ENCODE measurements at regions of chr13 and their contacts with region 1.

Region 1: GRCh38 chr13:106373989-106374572 is 161.4 kb downstream of the EFNB2 start:
- DNase-seq: peak; percentile 48
- H3K4me3 ChIP-seq: no peak overlapping the region
- H3K27ac ChIP-seq: peak overlapping the region; percentile 66
- H3K4me1 ChIP-seq: peaks cover 40% of the 10 kb centered on the region
- H3K27me3 ChIP-seq: no peaks in the 10 kb centered on the region
- CTCF ChIP-seq: no peak
- POLR2A ChIP-seq: no peak

Region 2: DNA sequence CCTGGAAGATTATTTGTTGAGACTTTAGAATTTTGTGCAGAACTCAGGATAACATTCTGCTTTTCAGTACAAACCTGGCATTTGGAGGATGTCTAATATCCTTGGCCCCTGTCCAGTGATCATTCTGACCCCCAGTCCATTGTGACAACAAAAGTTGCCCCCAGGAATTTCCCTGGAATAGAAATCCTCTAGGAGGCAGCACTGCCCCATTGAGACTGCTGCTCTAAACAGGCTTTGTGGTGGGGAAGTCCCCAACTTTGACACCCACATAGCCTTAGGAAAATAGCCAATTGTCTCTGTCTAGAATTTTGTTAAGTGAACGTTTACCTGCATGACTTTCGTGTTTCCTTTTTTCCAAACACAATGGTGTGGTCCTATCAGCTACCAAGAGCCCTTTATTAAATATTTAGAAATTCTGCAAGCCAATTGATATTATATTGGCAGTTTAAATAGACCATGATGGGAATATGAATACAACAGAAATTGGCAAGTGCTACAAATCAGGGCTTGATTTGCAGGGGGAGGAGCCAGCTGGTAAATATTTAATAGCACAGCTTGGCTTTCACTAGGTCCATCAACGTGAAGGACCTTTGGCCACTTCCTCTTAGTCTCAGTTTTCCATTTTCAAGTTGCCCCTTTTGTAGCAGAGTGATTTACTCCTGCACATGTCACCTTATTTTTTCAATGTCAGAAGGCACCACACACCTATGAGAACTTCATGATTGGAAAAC is 290.3 kb before region 1 on chr13:
- CTCF ChIA-PET with region 1: no interaction called
- POLR2A ChIA-PET with region 1: no interaction called
- dilution Hi-C with region 1: no loop called
- intact Hi-C with region 1: loop called (anchors 1 kb)
- DNase-seq: peak; percentile 86
- H3K4me3 ChIP-seq: no peak overlapping the region
- H3K27ac ChIP-seq: no peak overlapping the region
- H3K4me1 ChIP-seq: no peaks in the 10 kb centered on the region
- H3K27me3 ChIP-seq: no peaks in the 10 kb centered on the region
- CTCF ChIP-seq: peak; percentile 71 to 77
- POLR2A ChIP-seq: no peak

Region 3: DNA sequence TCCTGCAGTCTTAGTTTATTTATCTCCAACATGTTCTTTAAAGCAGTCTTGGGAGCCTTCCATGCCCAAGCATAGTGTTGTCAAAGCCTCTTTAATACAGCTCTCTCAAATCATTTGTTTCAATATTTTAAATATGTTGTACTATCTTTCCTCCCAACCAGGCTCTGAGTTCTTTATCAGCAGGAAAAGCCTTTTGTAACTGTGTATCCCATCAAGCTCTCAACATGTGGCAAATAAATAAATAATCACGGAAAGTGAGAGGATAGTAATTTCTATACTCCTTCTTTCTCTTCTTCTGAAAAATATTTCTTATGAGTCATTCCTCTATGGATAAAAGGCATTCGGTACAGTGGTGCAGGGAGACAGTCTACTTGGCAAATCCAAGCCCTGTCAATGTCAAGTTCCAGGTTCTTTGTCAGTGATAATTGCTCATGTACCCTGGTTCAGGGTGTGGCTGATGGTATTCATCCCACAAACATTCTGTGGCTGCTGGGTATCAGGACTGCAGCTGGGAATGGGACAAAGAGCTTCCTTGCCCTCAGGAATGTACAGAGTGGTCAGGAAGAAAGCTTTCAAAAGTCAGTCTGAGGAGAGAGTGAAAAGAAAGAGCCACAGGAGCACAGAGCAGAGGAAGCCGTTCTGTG is 222.9 kb before region 1 on chr13:
- CTCF ChIA-PET with region 1: no interaction called
- POLR2A ChIA-PET with region 1: no interaction called
- dilution Hi-C with region 1: no loop called
- intact Hi-C with region 1: loop called (anchors 10 kb)
- DNase-seq: peak; percentile 73
- H3K4me3 ChIP-seq: no peak overlapping the region
- H3K27ac ChIP-seq: peak overlapping the region; percentile 7
- H3K4me1 ChIP-seq: peaks cover 16% of the 10 kb centered on the region
- H3K27me3 ChIP-seq: no peaks in the 10 kb centered on the region
- CTCF ChIP-seq: no peak
- POLR2A ChIP-seq: no peak

Region 4: DNA sequence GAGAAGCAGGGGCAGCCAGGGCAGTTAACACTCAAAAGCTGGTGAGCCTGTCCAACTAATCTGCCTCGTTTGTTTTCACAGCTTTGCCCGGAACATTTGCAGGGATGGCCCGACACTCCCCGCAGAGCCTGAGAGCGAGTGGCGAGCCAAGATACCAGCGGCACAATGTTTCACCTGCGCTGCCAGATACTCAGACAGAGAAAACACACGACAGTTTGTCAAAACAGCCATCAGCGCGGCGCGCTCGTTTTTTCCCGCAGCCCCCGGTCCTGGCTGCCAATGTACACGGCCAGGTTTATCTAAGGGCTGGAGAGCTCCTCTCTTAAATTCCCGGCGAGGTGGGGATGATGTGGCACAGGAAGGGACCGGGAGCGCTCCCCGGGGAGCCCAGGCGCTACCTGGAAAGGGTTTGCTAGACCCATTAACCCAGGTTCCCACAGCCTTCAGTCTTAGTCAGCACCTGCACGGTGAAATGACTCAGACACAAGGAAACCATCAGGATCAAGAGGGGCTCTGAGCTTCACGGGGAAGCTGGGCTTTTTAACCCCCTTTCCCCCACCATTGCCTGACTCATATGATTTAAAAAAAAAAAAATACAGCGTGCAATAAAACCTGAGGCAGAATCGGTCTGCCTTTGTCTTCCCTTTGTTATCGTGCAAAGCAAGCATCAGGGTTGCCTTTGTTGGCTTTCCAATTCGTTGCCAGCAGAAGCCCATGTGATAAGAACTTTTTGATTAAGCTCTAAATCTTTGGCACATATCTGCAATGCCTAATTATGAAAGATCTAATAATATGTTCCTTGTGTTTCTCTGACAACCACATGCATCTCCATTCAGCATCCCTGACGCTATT is 24.8 kb before region 1 on chr13:
- CTCF ChIA-PET with region 1: no interaction called
- POLR2A ChIA-PET with region 1: interaction called, 3 read pairs
- dilution Hi-C with region 1: no loop called
- intact Hi-C with region 1: loop called (anchors 1 kb)
- DNase-seq: peak; percentile 99
- H3K4me3 ChIP-seq: peak overlapping the region in 2 of 3 experiments; percentile 17 to 52
- H3K27ac ChIP-seq: peak overlapping the region; percentile 98
- H3K4me1 ChIP-seq: peaks cover 30% of the 10 kb centered on the region
- H3K27me3 ChIP-seq: no peaks in the 10 kb centered on the region
- CTCF ChIP-seq: no peak
- POLR2A ChIP-seq: peak; percentile 71

Region 5: GRCh38 chr13:106471957-106472543 is 98.0 kb after region 1 on chr13:
- CTCF ChIA-PET with region 1: no interaction called
- POLR2A ChIA-PET with region 1: no interaction called
- dilution Hi-C with region 1: no loop called
- intact Hi-C with region 1: loop called (anchors 2 kb)
- DNase-seq: peak; percentile 77
- H3K4me3 ChIP-seq: no peak overlapping the region
- H3K27ac ChIP-seq: no peak overlapping the region
- H3K4me1 ChIP-seq: peaks cover 8% of the 10 kb centered on the region
- H3K27me3 ChIP-seq: no peaks in the 10 kb centered on the region
- CTCF ChIP-seq: no peak
- POLR2A ChIP-seq: no peak

Region 6: DNA sequence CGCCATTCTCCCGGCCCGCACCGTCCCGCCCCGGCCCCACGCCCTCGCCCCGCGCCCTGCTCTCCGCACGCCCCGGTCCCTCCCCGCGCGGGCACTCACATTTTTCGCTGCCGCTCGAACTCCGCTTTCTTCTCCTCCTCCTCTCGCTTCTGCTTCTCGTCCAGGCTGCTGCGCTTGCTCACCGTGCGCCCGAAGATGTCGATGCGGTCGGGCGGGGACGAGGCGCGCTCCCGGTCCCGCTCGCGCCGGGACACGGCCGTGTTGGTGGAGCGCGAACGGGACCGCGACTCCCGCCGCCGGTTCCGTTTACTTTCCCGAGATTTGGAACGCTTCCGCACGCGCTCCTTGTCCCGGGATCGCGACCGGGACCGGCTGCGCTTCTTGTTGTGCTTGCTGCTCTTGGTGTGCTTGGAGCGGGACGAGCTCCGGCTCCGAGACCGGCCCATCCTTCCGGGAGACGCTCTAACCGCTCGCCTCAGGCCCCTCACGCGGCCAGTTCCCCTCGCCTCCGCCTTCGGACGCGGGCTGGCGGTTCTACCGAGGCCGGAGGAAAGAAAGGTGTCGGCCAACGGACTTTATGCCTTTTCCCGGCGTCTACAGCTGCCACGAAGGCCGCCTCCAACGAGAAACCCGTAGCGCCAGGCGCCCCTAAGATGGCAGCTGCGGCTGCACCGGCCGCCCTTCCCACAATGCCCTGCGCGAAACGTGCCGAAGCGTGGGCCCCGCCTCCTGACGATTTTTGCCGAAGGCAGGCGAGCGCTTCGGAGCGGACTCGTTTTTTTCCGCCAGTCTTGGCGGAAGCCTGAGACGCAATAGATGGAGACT is 193.6 kb after region 1 on chr13 and contains the start of gene ARGLU1:
- CTCF ChIA-PET with region 1: no interaction called
- POLR2A ChIA-PET with region 1: no interaction called
- dilution Hi-C with region 1: no loop called
- intact Hi-C with region 1: loop called (anchors 1 kb)
- DNase-seq: peak; percentile 96
- H3K4me3 ChIP-seq: peak within 1 kb of the TSS; percentile 57 to 98 (median 79)
- H3K27ac ChIP-seq: peak within 1 kb of the TSS; percentile 85
- H3K4me1 ChIP-seq: peaks cover 26% of the 10 kb centered on the region
- H3K27me3 ChIP-seq: no peaks in the 10 kb centered on the region
- CTCF ChIP-seq: no peak
- POLR2A ChIP-seq: peak; percentile 92
- total RNA-seq, gene ARGLU1: 95.7 and 111 TPM in 2 replicates

Measured in endothelial cell of umbilical vein (primary cell).